ENCODE measurements at regions of chr12 and their contacts with region 1.

Region 1: GRCh38 chr12:109775172-109775881 is 57.9 kb downstream of the TRPV4 start:
- DNase-seq: peak; percentile 50 to 82 (median 72)
- ATAC-seq: peak; percentile 89
- H3K4me3 ChIP-seq: no peak overlapping the region
- H3K4me3 Mint-ChIP-seq: no peak overlapping the region
- H3K27ac ChIP-seq: no peak overlapping the region
- H3K27ac Mint-ChIP-seq: no peak overlapping the region
- H3K4me1 ChIP-seq: no peaks in the 10 kb centered on the region
- H3K4me1 Mint-ChIP-seq: peaks cover 5% of the 10 kb centered on the region
- H3K27me3 ChIP-seq: no peaks in the 10 kb centered on the region
- H3K27me3 Mint-ChIP-seq: no peaks in the 10 kb centered on the region
- CTCF ChIP-seq: peak; percentile 75

Region 2: GRCh38 chr12:109428037-109428629 is 347.2 kb before region 1 on chr12:
- CTCF ChIA-PET with region 1: interaction called, 26 read pairs
- POLR2A ChIA-PET with region 1: no interaction called
- intact Hi-C with region 1: loop called (anchors 1 kb)
- DNase-seq: peak; percentile 39 to 84 (median 73)
- ATAC-seq: peak; percentile 81
- H3K4me3 ChIP-seq: no peak overlapping the region
- H3K4me3 Mint-ChIP-seq: no peak overlapping the region
- H3K27ac ChIP-seq: no peak overlapping the region
- H3K27ac Mint-ChIP-seq: no peak overlapping the region
- H3K4me1 ChIP-seq: peaks cover 3% of the 10 kb centered on the region
- H3K4me1 Mint-ChIP-seq: peaks cover 6% of the 10 kb centered on the region
- H3K27me3 ChIP-seq: no peaks in the 10 kb centered on the region
- H3K27me3 Mint-ChIP-seq: peaks cover 6% of the 10 kb centered on the region
- CTCF ChIP-seq: peak; percentile 93

Region 3: GRCh38 chr12:109518820-109519665 is 256.3 kb before region 1 on chr12:
- CTCF ChIA-PET with region 1: interaction called, 59 read pairs
- POLR2A ChIA-PET with region 1: no interaction called
- intact Hi-C with region 1: loop called in 1 of 2 experiments (anchors 1 kb)
- DNase-seq: peak; percentile 19 to 66 (median 55)
- ATAC-seq: no peak
- H3K4me3 ChIP-seq: no peak overlapping the region
- H3K4me3 Mint-ChIP-seq: no peak overlapping the region
- H3K27ac ChIP-seq: no peak overlapping the region
- H3K27ac Mint-ChIP-seq: no peak overlapping the region
- H3K4me1 ChIP-seq: no peaks in the 10 kb centered on the region
- H3K4me1 Mint-ChIP-seq: no peaks in the 10 kb centered on the region
- H3K27me3 ChIP-seq: no peaks in the 10 kb centered on the region
- H3K27me3 Mint-ChIP-seq: no peaks in the 10 kb centered on the region
- CTCF ChIP-seq: peak; percentile 70

Region 4: GRCh38 chr12:109597795-109598427 is 177.4 kb before region 1 on chr12:
- CTCF ChIA-PET with region 1: interaction called, 130 read pairs
- POLR2A ChIA-PET with region 1: no interaction called
- intact Hi-C with region 1: loop called in 1 of 2 experiments (anchors 1 kb)
- DNase-seq: peak; percentile 31 to 76 (median 64)
- ATAC-seq: peak; percentile 70
- H3K4me3 ChIP-seq: no peak overlapping the region
- H3K4me3 Mint-ChIP-seq: no peak overlapping the region
- H3K27ac ChIP-seq: no peak overlapping the region
- H3K27ac Mint-ChIP-seq: no peak overlapping the region
- H3K4me1 ChIP-seq: peaks cover 11% of the 10 kb centered on the region
- H3K4me1 Mint-ChIP-seq: peaks cover 23% of the 10 kb centered on the region
- H3K27me3 ChIP-seq: no peaks in the 10 kb centered on the region
- H3K27me3 Mint-ChIP-seq: no peaks in the 10 kb centered on the region
- CTCF ChIP-seq: peak; percentile 85

Region 5: GRCh38 chr12:110124184-110124995 is 349.1 kb after region 1 on chr12 and contains the start of gene IFT81:
- CTCF ChIA-PET with region 1: no interaction called
- POLR2A ChIA-PET with region 1: no interaction called
- intact Hi-C with region 1: no loop called
- DNase-seq: peak; percentile 94 to 99 (median 96)
- ATAC-seq: peak; percentile 95
- H3K4me3 ChIP-seq: peak within 1 kb of the TSS; percentile 69 to 96
- H3K4me3 Mint-ChIP-seq: peak within 1 kb of the TSS; percentile 91
- H3K27ac ChIP-seq: peak within 1 kb of the TSS; percentile 60 to 73
- H3K27ac Mint-ChIP-seq: peak within 1 kb of the TSS; percentile 83
- H3K4me1 ChIP-seq: peaks cover 10% of the 10 kb centered on the region
- H3K4me1 Mint-ChIP-seq: peaks cover 8% of the 10 kb centered on the region
- H3K27me3 ChIP-seq: no peaks in the 10 kb centered on the region
- H3K27me3 Mint-ChIP-seq: peaks cover 3% of the 10 kb centered on the region
- CTCF ChIP-seq: no peak
- total RNA-seq, gene IFT81: 0.25 to 0.43 TPM

Measured in CD8-positive, alpha-beta T cell (primary cell).